PC-9 (cell line): ENCODE measurements at regions of chr11 and their contacts with region 1.

Region 1: DNA sequence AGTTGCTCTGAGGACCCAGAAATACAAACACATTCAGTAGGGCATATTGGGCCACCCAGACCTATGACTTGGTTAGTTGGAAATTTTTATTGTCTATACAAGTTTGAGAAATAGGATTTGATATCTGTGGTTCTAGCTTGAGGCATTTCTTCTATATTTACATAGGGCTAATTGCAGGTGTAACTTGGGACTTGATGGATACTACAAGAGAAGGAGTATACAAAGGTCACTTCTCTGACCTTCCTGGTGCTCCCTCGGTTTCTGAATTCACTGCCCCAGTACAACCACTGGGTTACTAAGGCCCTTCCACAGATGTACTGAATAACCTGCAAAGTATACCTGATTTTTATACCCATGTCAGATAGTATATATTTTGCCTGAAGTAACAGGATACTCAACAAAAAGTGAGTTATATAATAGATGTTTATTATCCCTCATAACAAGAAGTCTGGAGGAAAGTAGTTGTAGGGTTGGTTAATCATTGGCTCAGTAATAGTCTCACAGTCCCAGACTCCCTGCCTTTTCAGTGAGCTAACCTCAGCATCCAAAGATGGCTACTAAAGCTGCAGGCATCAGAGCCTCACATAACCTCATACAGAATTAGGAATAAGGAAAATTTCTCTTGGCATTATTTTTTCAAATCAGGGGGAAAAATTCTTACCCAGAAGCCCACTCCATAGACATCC is 8.8 kb upstream of the PGR start:
- DNase-seq: no peak
- H3K4me3 ChIP-seq: no peak overlapping the region
- H3K27ac ChIP-seq: no peak overlapping the region
- H3K4me1 ChIP-seq: no peaks in the 10 kb centered on the region
- H3K27me3 ChIP-seq: no peaks in the 10 kb centered on the region
- CTCF ChIP-seq: no peak

Region 2: GRCh38 chr11:101478587-101479369 is 340.4 kb after region 1 on chr11:
- CTCF ChIA-PET with region 1: no interaction called
- POLR2A ChIA-PET with region 1: interaction called, 10 read pairs
- intact Hi-C with region 1: no loop called
- DNase-seq: no peak
- H3K4me3 ChIP-seq: no peak overlapping the region
- H3K27ac ChIP-seq: no peak overlapping the region
- H3K4me1 ChIP-seq: no peaks in the 10 kb centered on the region
- H3K27me3 ChIP-seq: no peaks in the 10 kb centered on the region
- CTCF ChIP-seq: no peak